Activated B cell treated with CpG ODN at 0.5 μM for 24 hours (primary cell): ENCODE measurements at regions of chr19 and their contacts with region 1.

Region 1: DNA sequence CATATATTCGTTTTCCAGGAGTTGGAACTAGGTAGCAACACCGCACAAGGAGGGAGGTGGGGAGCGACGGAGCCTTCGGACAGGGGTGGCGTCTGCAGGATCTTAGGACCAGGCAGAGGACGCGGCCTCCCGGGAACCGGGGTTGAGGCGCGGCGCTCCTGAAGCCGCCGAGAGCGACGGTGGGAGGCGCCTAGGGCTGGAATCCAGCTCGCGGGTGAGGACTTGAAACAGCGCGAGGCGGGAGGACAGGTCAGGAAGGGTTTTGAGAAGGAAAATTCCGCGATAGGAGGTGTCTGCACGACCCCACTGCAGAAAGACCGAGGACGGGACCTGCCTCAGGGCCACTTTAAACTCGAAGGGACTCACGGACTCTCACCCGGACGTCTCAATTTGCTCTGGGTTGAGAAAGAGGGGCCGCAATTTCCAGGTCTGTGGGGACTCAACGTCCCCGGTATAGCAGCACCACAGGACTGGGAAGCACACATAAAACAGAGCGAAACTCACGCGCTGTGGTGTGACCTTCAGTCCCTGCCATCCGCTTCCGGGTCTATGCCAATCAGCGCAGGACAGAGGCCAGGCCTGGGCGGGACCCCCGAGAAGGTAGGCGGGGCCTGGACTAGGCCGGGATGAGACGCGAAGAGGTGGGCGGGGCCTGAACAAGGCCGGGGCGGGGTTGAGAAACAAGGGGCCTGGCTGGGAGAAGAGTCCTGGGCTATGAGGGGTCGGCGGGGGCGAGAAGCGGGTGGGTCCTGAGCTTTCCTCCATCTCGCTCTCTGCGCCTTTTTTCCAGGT is at the start of gene ZNF320:
- DNase-seq: peak; percentile 95
- ATAC-seq: peak; percentile 100
- H3K4me3 Mint-ChIP-seq: peak within 1 kb of the TSS; percentile 95
- H3K27ac Mint-ChIP-seq: peak within 1 kb of the TSS; percentile 94
- H3K4me1 Mint-ChIP-seq: peaks cover 15% of the 10 kb centered on the region
- H3K27me3 Mint-ChIP-seq: no peaks in the 10 kb centered on the region
- CTCF ChIP-seq: no peak
- total RNA-seq, gene ZNF320: 23.0 and 24.0 TPM in 2 replicates

Region 2: GRCh38 chr19:52786457-52787359 is 110.6 kb before region 1 on chr19 and contains the start of gene ZNF600:
- CTCF ChIA-PET with region 1: no interaction called
- POLR2A ChIA-PET with region 1: no interaction called
- intact Hi-C with region 1: loop called (anchors 1 kb)
- DNase-seq: peak; percentile 88
- ATAC-seq: peak; percentile 99
- H3K4me3 Mint-ChIP-seq: peak within 1 kb of the TSS; percentile 96
- H3K27ac Mint-ChIP-seq: peak within 1 kb of the TSS; percentile 90
- H3K4me1 Mint-ChIP-seq: peaks cover 36% of the 10 kb centered on the region
- H3K27me3 Mint-ChIP-seq: no peaks in the 10 kb centered on the region
- CTCF ChIP-seq: no peak
- total RNA-seq, gene ZNF600: 25.2 and 30.5 TPM in 2 replicates

Region 3: DNA sequence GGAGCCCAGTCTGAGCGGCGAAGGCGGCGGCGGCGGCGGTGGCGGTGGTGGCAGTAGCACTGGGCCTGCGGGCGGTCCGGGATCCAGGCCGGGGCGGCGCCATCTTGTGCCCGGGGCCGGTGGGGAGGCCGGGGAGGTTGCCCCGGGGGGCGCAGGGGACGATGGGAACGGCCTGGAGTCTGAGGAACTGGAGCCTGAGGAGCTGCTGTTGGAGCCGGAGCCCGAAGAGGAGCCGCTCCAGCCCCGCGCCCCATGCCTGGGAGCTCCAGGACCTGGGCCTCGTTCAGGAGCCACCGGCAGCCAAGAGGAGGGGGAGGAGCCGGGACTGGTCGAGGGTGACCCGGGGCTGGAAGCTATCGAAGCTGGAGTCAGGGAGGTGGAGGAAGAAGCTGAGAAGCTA is 87.5 kb before region 1 on chr19:
- CTCF ChIA-PET with region 1: no interaction called
- POLR2A ChIA-PET with region 1: no interaction called
- intact Hi-C with region 1: no loop called
- DNase-seq: no peak
- ATAC-seq: no peak
- H3K4me3 Mint-ChIP-seq: no peak overlapping the region
- H3K27ac Mint-ChIP-seq: no peak overlapping the region
- H3K4me1 Mint-ChIP-seq: no peaks in the 10 kb centered on the region
- H3K27me3 Mint-ChIP-seq: no peaks in the 10 kb centered on the region
- CTCF ChIP-seq: no peak

Region 4: GRCh38 chr19:52853880-52854279 is 43.5 kb before region 1 on chr19:
- CTCF ChIA-PET with region 1: no interaction called
- POLR2A ChIA-PET with region 1: interaction called, 4 read pairs
- intact Hi-C with region 1: loop called (anchors 2 kb)
- DNase-seq: no peak
- ATAC-seq: no peak
- H3K4me3 Mint-ChIP-seq: no peak overlapping the region
- H3K27ac Mint-ChIP-seq: no peak overlapping the region
- H3K4me1 Mint-ChIP-seq: peaks cover 22% of the 10 kb centered on the region
- H3K27me3 Mint-ChIP-seq: no peaks in the 10 kb centered on the region
- CTCF ChIP-seq: no peak

Region 5: GRCh38 chr19:52922841-52923777 is 25.8 kb after region 1 on chr19 and contains the start of gene ZNF888:
- CTCF ChIA-PET with region 1: no interaction called
- POLR2A ChIA-PET with region 1: no interaction called
- intact Hi-C with region 1: loop called (anchors 2 kb)
- DNase-seq: peak; percentile 81
- ATAC-seq: peak; percentile 100
- H3K4me3 Mint-ChIP-seq: peak within 1 kb of the TSS; percentile 95
- H3K27ac Mint-ChIP-seq: peak within 1 kb of the TSS; percentile 88
- H3K4me1 Mint-ChIP-seq: peaks cover 29% of the 10 kb centered on the region
- H3K27me3 Mint-ChIP-seq: no peaks in the 10 kb centered on the region
- CTCF ChIP-seq: no peak
- total RNA-seq, gene ZNF888: 9.0 and 11.9 TPM in 2 replicates

Region 6: GRCh38 chr19:52942386-52943133 is 45.2 kb after region 1 on chr19:
- CTCF ChIA-PET with region 1: no interaction called
- POLR2A ChIA-PET with region 1: interaction called, 6 read pairs
- intact Hi-C with region 1: loop called (anchors 1 kb)
- DNase-seq: peak; percentile 98
- ATAC-seq: peak; percentile 99
- H3K4me3 Mint-ChIP-seq: peak overlapping the region; percentile 96
- H3K27ac Mint-ChIP-seq: peak overlapping the region; percentile 92
- H3K4me1 Mint-ChIP-seq: peaks cover 31% of the 10 kb centered on the region
- H3K27me3 Mint-ChIP-seq: no peaks in the 10 kb centered on the region
- CTCF ChIP-seq: no peak